Tibial artery (tissue), 4 donors: ENCODE measurements at regions of chr7 and their contacts with region 1.

Region 1: GRCh38 chr7:44847508-44847920 is 373 bp downstream of the H2AZ2 start:
- DNase-seq: peak; percentile 84 to 92
- H3K4me3 ChIP-seq: peak overlapping the region; percentile 55 to 86
- H3K27ac ChIP-seq: peak overlapping the region; percentile 89 to 97
- H3K4me1 ChIP-seq: peaks cover 0 to 33% (median 11%) of the 10 kb centered on the region in 4 donors
- H3K27me3 ChIP-seq: no peaks in the 10 kb centered on the region
- CTCF ChIP-seq: peak; percentile 89 to 90

Region 2: DNA sequence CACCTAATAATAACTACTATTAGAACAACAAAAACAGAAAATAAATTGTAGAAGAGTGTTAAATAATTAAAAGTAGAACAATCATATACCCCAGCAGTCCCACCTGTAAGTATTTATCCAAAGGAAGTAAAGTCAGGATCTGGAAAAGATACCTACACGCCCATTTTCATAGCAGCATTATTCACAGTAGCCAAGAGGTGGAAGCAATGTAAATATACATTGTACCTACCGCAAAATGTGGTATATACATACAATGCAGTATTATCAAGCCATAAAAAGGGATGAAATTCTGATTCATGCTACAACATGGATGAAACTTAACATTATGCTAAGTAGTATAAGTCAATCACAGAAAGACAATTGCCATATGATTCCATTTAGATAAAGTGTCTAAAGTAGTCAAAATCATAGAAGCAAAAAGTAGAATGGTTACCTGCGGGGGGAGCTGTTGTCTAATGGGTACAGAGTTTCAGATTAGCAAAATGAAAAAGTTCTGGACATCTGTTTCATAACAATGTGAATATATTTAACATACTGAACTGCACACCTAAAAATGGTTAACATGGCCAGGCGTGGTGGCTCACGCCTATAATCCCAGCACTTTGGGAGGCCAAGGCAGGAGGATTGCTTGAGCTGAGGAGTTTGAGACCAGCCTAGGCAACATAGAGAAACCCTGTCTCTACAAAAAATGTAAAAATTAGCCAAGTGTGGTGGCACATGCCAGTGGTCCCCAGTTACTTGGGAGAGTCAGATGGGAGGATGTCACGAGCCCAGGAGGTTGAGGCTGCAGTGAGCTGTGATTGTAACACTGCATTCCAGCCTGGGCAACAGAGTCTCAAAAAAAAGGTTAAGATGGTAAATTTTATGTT is 259.4 kb before region 1 on chr7:
- intact Hi-C with region 1: loop called (anchors 5 kb)
- DNase-seq: peak in 1 of 2 donors; percentile 51
- H3K4me3 ChIP-seq: no peak overlapping the region
- H3K27ac ChIP-seq: no peak overlapping the region
- H3K4me1 ChIP-seq: peaks cover 0 to 2% (median under 1%) of the 10 kb centered on the region in 4 donors
- H3K27me3 ChIP-seq: no peaks in the 10 kb centered on the region
- CTCF ChIP-seq: peak; percentile 59 to 62

Region 3: GRCh38 chr7:44797329-44798251 is 49.9 kb before region 1 on chr7:
- intact Hi-C with region 1: loop called (anchors 2 kb)
- DNase-seq: peak; percentile 92 to 96
- H3K4me3 ChIP-seq: peak overlapping the region; percentile 72 to 88
- H3K27ac ChIP-seq: peak overlapping the region; percentile 94 to 98
- H3K4me1 ChIP-seq: peaks cover 0 to 28% (median 21%) of the 10 kb centered on the region in 4 donors
- H3K27me3 ChIP-seq: no peaks in the 10 kb centered on the region
- CTCF ChIP-seq: peak; percentile 21 to 23

Region 4: GRCh38 chr7:44875241-44875640 is 27.7 kb after region 1 on chr7:
- intact Hi-C with region 1: no loop called
- DNase-seq: no peak
- H3K4me3 ChIP-seq: no peak overlapping the region
- H3K27ac ChIP-seq: no peak overlapping the region
- H3K4me1 ChIP-seq: peaks cover 0 to 34% (median 12%) of the 10 kb centered on the region in 4 donors
- H3K27me3 ChIP-seq: no peaks in the 10 kb centered on the region
- CTCF ChIP-seq: no peak

Region 5: DNA sequence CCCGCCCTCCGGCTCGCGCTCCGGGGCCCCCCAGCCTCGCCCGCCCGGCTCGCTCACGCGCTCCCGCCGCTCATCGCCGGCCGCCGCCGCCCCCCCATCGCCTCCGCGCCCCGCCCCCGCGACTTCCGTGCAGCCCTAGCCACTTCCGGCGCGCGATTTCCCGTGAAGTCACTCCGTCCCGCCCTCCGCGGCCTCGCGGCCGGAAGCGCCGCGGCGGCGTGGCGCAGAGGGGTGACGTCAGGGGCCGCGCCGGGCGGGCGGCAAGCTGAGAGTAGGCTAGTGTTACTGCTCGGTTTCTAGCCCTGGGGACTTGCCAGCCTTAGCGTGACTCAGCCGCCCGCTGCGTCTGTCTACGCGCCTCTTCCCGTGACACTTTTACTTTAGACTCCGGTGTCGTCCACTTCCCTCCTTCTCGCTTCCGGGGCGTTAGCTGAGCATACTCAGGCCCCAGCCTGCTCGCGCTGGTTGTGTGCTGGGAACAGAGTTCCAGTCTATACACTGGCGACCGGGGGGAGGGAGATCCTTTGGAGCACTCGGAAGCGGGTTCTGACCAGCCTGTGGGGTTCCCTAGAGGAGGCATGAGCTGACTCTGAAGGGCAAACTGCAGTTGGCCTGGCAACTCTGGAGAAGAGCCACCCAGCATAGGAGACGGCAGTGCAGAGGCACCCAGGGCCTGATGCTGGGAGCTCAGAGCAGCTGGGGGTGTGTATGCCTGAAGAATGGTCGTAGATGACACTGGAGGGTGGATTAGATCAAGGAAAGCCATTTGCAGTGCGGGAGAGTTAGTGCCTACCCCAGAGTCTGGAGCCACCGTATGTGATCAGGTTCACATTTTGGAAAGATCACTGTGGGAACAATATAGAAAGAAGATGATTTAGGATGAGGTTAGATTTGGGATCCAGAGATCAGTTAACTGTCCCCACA is 38.1 kb after region 1 on chr7 and contains the start of gene PURB:
- intact Hi-C with region 1: loop called (anchors 5 kb)
- DNase-seq: peak; percentile 93 to 96
- H3K4me3 ChIP-seq: peak within 1 kb of the TSS; percentile 79 to 98
- H3K27ac ChIP-seq: peak within 1 kb of the TSS; percentile 97
- H3K4me1 ChIP-seq: peaks cover 0 to 48% (median 39%) of the 10 kb centered on the region in 4 donors
- H3K27me3 ChIP-seq: no peaks in the 10 kb centered on the region
- CTCF ChIP-seq: no peak